Vagina (tissue), 2 donors: ENCODE measurements at regions of chr1 and their contacts with region 1.

Region 1: DNA sequence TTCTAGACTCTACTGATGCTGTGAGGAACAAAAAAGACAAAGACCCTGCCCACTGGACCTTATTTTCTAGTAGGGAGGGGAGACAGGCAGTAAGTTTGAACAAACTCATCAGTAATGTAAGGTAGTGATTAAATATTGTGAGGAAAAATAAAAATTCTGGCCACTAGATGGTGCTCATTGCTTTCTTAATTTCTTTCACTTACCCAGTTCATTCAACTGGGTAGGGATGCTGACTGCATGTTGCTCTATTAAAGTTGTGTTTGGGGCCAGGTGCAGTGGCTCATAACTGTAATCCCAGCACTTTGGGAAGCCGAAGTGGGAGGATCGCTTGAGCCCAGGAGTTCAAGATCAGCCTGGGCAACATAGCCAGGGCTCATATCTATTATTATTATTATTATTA is 6.3 kb upstream of the KYAT3 start:
- DNase-seq: no peak
- H3K4me3 ChIP-seq: no peak overlapping the region
- H3K27ac ChIP-seq: no peak overlapping the region
- H3K4me1 ChIP-seq: peaks cover 3% of the 10 kb centered on the region
- H3K27me3 ChIP-seq: no peaks in the 10 kb centered on the region
- CTCF ChIP-seq: peak; percentile 21 to 74 (median 39)
- POLR2A ChIP-seq: no peak

Region 2: GRCh38 chr1:89112871-89113613 is 114.3 kb after region 1 on chr1:
- intact Hi-C with region 1: no loop called
- DNase-seq: no peak
- H3K4me3 ChIP-seq: no peak overlapping the region
- H3K27ac ChIP-seq: no peak overlapping the region
- H3K4me1 ChIP-seq: no peaks in the 10 kb centered on the region
- H3K27me3 ChIP-seq: no peaks in the 10 kb centered on the region
- CTCF ChIP-seq: no peak
- POLR2A ChIP-seq: no peak

Region 3: GRCh38 chr1:89125913-89126580 is 127.3 kb after region 1 on chr1 and contains the start of gene GBP2:
- intact Hi-C with region 1: no loop called
- DNase-seq: no peak
- H3K4me3 ChIP-seq: peak within 1 kb of the TSS; percentile 61 to 64
- H3K27ac ChIP-seq: peak within 1 kb of the TSS; percentile 92
- H3K4me1 ChIP-seq: peaks cover 61% of the 10 kb centered on the region
- H3K27me3 ChIP-seq: no peaks in the 10 kb centered on the region
- CTCF ChIP-seq: no peak
- POLR2A ChIP-seq: peak in 1 of 2 donors; percentile 76
- total RNA-seq, gene GBP2: 59.4 TPM

Region 4: GRCh38 chr1:89358287-89358893 is 359.7 kb after region 1 on chr1:
- intact Hi-C with region 1: loop called (anchors 5 kb)
- DNase-seq: no peak
- H3K4me3 ChIP-seq: no peak overlapping the region
- H3K27ac ChIP-seq: no peak overlapping the region
- H3K4me1 ChIP-seq: no peaks in the 10 kb centered on the region
- H3K27me3 ChIP-seq: no peaks in the 10 kb centered on the region
- CTCF ChIP-seq: peak; percentile 65 to 86 (median 74)
- POLR2A ChIP-seq: no peak

Region 5: GRCh38 chr1:89552471-89553081 is 553.9 kb after region 1 on chr1:
- intact Hi-C with region 1: no loop called
- DNase-seq: no peak
- H3K4me3 ChIP-seq: no peak overlapping the region
- H3K27ac ChIP-seq: no peak overlapping the region
- H3K4me1 ChIP-seq: peaks cover 31% of the 10 kb centered on the region
- H3K27me3 ChIP-seq: no peaks in the 10 kb centered on the region
- CTCF ChIP-seq: no peak
- POLR2A ChIP-seq: no peak